MCF 10A (cell line): ENCODE measurements at regions of chr1 and their contacts with region 1.

Region 1: DNA sequence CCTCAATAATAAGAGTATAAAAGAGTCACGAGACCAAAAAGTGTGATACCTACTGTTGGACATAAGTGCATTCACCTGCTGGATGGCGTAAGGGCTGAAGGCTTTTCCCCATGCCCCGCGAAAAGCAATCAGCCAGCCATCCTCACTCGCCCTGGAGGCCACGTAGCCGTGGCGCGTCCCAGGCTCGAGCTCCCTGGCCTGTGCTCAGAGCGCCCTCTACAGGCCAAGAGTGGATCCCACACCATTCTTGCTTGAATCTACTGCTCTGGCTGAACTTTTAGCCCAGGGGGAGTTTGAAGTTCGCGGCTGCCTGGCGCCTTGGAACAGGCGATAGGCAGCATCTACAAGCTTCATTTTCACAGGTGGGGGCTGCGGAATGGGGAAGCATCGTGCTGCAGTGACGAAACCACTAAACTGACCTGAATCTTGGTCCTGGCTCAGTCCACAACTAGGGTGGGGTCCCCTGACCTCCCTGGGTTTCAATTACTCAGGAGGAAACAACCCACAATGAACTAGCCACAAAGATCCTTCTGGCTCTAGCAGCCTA is 70.3 kb upstream of the SERBP1 start:
- DNase-seq: peak; percentile 92
- H3K4me3 Mint-ChIP-seq: no peak overlapping the region
- H3K27ac Mint-ChIP-seq: no peak overlapping the region
- H3K4me1 Mint-ChIP-seq: no peaks in the 10 kb centered on the region
- H3K27me3 Mint-ChIP-seq: no peaks in the 10 kb centered on the region
- CTCF ChIP-seq: peak; percentile 95

Region 2: DNA sequence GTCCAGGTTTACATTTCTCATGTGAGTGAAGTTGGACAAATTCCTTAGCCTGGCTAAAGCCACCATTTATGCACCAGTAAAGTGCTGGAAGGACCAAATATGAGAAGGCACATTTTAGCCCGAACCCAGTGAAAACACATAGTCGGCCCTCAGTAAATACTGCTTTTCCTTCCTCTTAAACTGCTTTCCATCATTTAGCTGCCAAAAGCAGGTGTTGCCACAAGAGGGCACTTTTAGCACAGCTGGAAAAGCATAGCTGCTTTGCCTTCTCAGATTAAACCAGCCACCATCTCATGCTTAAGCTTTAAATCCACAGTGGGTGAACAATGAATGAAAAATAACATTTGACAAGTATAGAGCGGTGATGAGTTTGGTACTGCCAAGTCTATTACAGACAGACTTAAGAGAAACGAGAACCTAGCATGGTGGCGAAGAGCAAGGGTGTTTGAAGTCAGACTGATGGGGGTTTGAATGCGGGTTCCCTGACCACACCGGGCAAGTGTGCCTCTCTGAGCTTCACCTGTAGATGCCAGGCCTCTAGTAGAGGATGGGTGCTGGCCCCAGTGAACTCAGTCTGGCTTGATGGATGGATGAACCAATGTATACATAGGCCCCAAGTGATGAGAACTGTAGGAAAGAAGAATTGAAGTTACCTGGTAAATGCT is 504.3 kb before region 1 on chr1:
- CTCF ChIA-PET with region 1: interaction called, 13 read pairs
- POLR2A ChIA-PET with region 1: no interaction called
- intact Hi-C with region 1: loop called (anchors 2 kb)
- DNase-seq: peak; percentile 73
- H3K4me3 Mint-ChIP-seq: no peak overlapping the region
- H3K27ac Mint-ChIP-seq: no peak overlapping the region
- H3K4me1 Mint-ChIP-seq: no peaks in the 10 kb centered on the region
- H3K27me3 Mint-ChIP-seq: no peaks in the 10 kb centered on the region
- CTCF ChIP-seq: peak; percentile 69

Region 3: DNA sequence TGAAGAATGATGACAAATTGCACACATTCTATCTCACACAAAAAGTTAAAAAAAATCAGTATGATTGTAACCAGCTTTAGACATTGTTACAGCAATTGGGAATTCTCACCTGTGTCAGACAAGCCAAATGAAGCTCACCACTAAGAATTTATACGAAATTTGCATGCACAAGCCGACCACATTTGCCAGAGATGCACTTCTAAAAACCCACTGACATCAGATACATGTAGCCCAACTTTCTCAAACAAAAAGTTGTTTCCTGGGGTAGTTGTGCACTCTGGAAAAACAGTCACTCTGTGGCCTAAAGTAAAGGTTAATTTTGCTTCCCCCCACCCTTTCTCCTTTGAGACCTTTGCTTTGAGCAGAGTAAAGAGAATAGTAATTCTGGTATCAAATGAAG is 260.7 kb before region 1 on chr1:
- CTCF ChIA-PET with region 1: interaction called, 20 read pairs
- POLR2A ChIA-PET with region 1: no interaction called
- intact Hi-C with region 1: loop called (anchors 1 kb)
- DNase-seq: no peak
- H3K4me3 Mint-ChIP-seq: no peak overlapping the region
- H3K27ac Mint-ChIP-seq: no peak overlapping the region
- H3K4me1 Mint-ChIP-seq: no peaks in the 10 kb centered on the region
- H3K27me3 Mint-ChIP-seq: no peaks in the 10 kb centered on the region
- CTCF ChIP-seq: no peak

Region 4: DNA sequence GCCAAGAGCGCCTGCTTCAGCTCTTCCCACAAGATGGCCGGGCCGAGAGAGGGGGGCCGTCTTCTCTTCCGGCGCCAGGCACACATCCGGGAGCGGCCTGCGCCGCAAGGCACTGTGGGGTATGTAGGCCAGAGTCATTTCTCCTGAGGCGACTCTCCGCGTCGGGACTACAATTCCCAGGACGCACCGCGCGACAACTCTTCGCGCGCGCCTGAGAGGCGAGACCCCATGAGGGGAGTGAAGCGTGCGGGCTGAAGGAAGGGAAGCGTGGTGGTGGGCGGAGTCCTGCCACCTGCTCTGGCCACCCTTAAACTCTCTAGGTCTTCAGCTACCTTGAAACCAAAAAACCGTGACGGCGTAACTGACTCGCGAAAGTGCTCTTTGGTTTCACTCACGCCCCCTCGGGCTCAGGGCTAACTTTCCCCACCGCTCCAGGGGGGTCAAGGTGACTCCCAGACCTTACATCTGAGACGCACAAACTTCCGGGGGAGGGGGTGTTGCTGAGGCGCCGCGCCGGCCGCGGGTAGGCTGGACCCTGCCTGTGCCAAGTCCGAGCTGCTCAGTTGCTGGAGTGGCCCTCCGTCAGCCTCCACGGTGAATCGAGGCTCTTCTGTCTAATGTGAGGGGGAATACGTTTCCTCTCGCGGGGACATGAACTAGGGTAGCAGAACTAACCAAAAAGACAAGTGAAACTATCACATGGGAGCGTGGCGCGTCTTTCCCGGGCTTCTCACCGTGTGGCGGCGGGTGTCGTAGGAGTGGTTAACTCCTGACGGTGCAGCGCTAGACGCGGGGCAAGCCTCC is 69.9 kb before region 1 on chr1 and contains the start of gene SERBP1:
- CTCF ChIA-PET with region 1: interaction called, 56 read pairs
- POLR2A ChIA-PET with region 1: interaction called, 6 read pairs
- intact Hi-C with region 1: loop called (anchors 2 kb)
- DNase-seq: peak; percentile 98
- H3K4me3 Mint-ChIP-seq: peak within 1 kb of the TSS; percentile 100
- H3K27ac Mint-ChIP-seq: peak within 1 kb of the TSS; percentile 98
- H3K4me1 Mint-ChIP-seq: peaks cover 28% of the 10 kb centered on the region
- H3K27me3 Mint-ChIP-seq: no peaks in the 10 kb centered on the region
- CTCF ChIP-seq: no peak
- total RNA-seq, gene SERBP1: 233 and 315 TPM in 2 replicates

Region 5: DNA sequence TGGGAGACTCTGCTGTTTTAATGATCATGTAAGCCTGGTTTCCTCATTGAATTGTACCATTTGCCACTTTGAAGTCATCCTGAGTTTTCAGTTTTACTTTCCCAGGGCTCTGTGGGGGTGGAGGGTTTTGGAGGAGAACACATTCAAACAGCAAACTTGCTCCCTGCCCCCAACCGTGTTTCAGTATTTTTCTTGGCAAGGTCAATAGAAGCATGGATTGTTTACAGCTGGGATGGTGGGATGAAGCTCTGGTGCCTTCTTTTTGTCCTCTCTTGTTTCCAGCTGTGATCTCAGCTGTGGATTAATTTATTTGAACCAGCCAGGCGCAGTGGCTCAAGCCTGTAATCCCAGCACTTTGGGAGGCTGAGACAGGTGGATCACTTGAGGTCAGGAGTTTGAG is 16.0 kb before region 1 on chr1:
- CTCF ChIA-PET with region 1: interaction called, 37 read pairs
- POLR2A ChIA-PET with region 1: no interaction called
- intact Hi-C with region 1: no loop called
- DNase-seq: no peak
- H3K4me3 Mint-ChIP-seq: no peak overlapping the region
- H3K27ac Mint-ChIP-seq: no peak overlapping the region
- H3K4me1 Mint-ChIP-seq: no peaks in the 10 kb centered on the region
- H3K27me3 Mint-ChIP-seq: no peaks in the 10 kb centered on the region
- CTCF ChIP-seq: no peak

Region 6: DNA sequence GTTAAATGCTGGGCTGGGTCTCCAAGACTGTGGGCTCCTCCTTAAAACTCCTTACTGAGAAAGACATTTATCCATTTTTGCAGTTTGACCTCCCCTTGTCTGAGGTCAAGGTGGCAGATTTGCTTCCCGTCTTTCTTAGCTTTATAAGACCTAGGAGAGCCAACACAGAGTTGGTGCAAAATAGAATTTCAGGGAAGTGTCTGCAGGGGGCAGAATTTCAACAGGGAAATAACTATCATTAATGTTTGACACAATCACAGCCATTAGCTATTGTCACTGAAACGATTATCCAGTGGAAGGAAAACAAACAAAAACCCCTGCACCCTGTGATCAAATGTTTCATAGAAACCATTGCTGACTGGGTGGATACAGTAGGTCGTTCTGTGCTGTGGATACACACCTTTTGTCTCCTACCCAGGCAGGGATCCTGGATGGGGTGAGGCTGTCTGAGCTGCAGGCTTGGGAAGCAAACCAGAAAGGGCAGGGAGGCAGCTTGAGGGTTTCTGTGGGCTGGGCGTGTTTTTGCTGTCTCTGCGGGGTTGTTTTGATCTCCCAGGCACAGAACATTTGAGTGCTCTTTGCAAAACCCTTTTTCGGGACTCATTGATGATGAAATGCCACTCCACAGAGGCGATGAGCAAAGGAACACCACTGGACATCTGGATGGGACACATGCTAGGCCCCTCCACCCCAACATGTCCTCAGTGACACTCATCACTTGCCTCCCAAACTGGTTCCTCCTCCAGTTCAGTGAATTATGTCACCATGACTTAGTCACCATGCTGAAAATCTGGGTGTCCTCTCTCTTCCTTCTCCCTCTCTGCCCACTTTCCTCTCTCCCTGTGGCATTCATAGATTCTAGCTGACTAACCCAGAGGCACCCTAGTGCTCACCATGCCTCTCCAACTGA is 23.9 kb after region 1 on chr1:
- CTCF ChIA-PET with region 1: interaction called, 30 read pairs
- POLR2A ChIA-PET with region 1: no interaction called
- intact Hi-C with region 1: no loop called
- DNase-seq: no peak
- H3K4me3 Mint-ChIP-seq: no peak overlapping the region
- H3K27ac Mint-ChIP-seq: no peak overlapping the region
- H3K4me1 Mint-ChIP-seq: peaks cover 11% of the 10 kb centered on the region
- H3K27me3 Mint-ChIP-seq: no peaks in the 10 kb centered on the region
- CTCF ChIP-seq: peak; percentile 10